GM13977 (cell line): ENCODE measurements at regions of chr7 and their contacts with region 1.

Region 1: DNA sequence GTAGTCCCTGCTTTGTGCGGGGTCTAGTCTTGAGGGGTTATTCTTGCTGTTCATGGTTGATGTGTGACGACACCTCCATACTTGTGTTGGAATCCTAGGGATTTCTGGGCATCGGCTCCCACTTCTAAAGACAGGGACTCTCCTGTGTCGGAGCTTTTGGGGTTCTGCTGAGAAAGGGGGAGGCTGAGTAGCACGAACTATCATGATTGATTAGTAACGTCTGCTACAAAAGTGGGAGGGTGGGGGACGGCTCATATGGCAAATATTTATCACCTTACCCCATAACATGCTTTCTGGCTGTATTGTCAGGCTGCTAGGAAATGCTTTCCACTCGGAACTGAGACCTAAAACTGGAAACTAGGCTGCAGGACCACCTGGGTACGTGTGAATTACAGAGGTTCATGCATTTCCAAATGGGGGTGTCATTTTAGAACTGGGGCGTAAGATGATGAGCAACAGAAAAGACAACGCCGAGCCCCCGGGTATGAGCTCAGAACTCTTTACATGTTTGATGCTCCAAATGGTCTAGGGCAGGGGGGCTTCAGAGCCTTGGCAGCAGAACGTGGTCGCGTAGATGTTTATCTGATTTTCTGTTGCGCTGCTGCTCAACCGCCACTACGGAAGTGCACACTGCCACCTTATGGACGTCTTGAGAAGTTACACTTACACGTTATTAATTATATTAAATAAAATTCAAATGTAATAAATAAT is 15.1 kb upstream of the NME8 start:
- DNase-seq: peak; percentile 40
- CTCF ChIP-seq: peak; percentile 58

Region 2: DNA sequence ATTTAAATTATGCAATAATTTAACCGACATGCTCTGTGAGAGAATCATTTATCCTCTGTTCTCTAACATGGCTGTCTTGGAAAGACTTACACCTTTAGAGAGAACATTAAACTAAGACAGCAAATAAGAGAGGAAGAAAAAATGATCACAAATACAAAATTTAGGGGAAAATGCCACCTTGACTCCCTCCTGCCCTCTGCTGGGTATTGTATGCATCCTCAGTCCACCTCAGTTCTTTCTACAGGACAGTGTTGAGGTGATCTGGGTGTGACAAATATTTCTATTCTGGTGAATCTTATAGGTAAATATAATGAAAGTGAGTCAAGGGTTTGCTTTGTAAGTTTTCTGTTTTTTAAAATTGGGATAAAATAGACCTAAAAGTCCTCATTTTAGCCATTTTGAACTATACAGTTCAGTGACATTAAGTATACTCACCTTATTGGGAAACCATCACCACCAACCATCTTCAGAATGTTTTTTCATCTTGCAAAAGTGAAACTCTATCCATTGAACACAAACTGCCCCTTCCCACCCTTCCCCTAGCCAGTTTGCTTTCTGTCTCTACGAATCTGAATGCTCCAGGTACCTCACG is 323.1 kb before region 1 on chr7:
- in situ Hi-C with region 1: loop called (anchors 25 kb)
- DNase-seq: peak; percentile 34
- CTCF ChIP-seq: peak; percentile 68

Region 3: GRCh38 chr7:37601321-37601720 is 231.9 kb before region 1 on chr7:
- in situ Hi-C with region 1: no loop called
- DNase-seq: no peak
- CTCF ChIP-seq: no peak